ENCODE measurements at regions of chr1 and their contacts with region 1.

Region 1: DNA sequence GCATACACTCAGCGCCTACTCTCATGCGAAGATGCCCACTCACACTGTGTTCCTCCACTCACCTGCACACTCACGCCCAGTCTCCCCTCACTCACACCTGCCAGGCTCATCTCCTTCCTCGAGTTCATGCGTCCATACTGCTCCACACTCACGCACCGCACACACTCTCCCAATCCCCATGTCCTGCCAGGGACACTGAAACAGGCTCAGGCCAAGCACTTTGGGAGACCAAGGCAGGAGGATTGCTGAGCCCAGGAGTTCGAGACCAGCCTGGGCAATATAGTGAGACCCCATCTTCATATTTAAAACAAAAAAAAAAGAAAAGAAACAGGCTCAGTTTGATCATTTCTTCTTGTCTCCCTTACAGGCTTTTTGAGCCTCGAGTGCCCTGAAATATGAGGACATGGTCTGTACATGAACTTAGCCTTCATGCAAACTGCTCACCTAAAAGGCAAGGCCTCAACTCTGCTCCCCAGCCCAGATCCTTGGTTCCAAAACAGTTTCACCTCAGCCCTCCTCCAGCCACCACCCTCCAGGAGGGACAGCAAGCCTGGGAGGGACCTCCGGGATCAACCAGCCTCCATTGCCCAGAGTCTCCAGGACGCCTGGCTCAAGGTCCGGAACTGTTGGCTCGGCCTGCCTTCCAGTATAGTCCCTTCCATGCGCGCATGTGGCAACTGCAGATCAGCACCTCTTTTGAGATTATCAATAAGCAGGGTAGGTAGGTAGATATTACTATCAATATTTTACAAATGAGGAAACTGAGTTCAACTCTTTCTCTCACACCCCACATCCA is 2.4 kb upstream of the PTAFR start:
- DNase-seq: no peak
- ATAC-seq: no peak
- H3K4me3 ChIP-seq: no peak overlapping the region
- H3K27ac ChIP-seq: no peak overlapping the region
- H3K4me1 ChIP-seq: peaks cover 5 to 12% of the 10 kb centered on the region in 2 experiments
- H3K27me3 ChIP-seq: peaks cover 0 to 4% of the 10 kb centered on the region in 2 experiments; a peak in 2 of 5 replicates
- CTCF ChIP-seq: no peak
- EP300 ChIP-seq: no peak
- POLR2A ChIP-seq: no peak
- RAD21 ChIP-seq: no peak

Region 2: DNA sequence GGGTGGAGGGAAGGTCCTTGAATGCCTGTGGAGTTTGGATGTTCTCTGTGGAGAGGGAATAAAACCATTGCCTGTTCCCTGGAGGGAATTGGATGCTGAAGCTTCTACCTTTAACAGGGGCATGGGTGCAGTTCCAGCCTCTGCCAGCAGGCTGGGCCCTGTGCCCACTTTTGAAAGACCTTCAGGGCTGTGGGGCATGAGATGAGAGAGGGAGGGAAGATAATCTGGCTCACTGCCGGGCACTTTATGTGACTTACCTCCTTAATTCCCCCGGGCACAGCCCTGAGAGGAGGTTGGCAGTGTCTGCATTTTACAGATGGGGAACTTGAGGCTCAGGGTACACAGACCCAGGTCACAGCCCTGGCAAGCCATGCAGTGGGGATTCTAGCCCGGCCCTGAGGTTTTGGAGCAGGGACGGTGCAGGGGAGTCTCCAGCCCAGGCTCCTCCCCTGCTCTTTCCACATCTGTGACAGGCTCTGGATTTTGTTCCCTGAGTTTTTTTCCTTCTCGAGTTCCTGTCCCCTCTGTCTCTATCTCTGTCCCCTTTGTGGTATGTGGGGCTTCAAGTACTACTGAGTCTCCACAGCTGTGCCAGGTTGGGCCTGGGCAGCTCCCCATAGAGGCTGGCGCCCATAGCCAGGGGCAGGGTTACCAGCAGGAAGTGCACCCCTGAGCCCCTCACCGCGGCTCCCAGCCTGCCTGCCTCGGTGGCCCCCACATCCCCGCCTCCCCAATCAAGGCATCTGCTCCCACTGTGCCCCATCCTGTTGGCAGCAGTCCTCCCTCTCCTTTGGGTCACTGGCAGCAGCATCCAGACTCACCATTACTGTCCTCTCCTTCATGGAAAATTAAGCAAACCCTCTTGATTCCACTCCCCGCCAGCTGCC is 320.6 kb before region 1 on chr1:
- CTCF ChIA-PET with region 1: no interaction called
- POLR2A ChIA-PET with region 1: no interaction called
- in situ Hi-C with region 1: no loop called
- intact Hi-C with region 1: no loop called
- DNase-seq: peak; percentile 69 to 90 (median 76)
- ATAC-seq: peak; percentile 92
- H3K4me3 ChIP-seq: no peak overlapping the region
- H3K27ac ChIP-seq: no peak overlapping the region
- H3K4me1 ChIP-seq: peaks cover 8 to 23% of the 10 kb centered on the region in 2 experiments; a peak in 4 of 5 replicates
- H3K27me3 ChIP-seq: no peaks in the 10 kb centered on the region
- CTCF ChIP-seq: peak; percentile 94 to 100 (median 99)
- EP300 ChIP-seq: peak; percentile 54; the same call in 1 of the 2 replicates
- POLR2A ChIP-seq: no peak
- RAD21 ChIP-seq: peak; percentile 98 to 99

Region 3: DNA sequence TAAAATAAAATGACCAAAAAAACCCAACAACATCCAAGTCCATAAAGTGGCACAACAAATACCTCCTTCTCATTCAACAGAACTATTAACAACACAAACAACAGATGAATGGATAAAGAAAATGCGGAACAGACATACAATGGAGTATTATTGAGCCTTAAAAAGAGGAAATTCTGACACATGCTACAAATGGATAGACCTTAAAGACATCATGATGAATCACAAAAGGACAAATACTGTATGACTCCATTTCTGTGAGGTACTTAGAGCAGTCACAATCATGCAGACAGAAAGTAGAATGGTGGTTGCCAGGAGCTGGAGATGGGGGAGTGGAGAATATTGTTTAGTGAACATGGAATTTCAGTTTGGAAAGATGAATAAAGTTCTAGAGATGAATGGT is 133.1 kb before region 1 on chr1:
- CTCF ChIA-PET with region 1: no interaction called
- POLR2A ChIA-PET with region 1: no interaction called
- in situ Hi-C with region 1: no loop called
- intact Hi-C with region 1: no loop called
- DNase-seq: no peak
- ATAC-seq: no peak
- H3K4me3 ChIP-seq: no peak overlapping the region
- H3K27ac ChIP-seq: no peak overlapping the region
- H3K4me1 ChIP-seq: peaks cover 0 to 2% of the 10 kb centered on the region in 2 experiments; a peak in 2 of 5 replicates
- H3K27me3 ChIP-seq: no peaks in the 10 kb centered on the region
- CTCF ChIP-seq: no peak
- EP300 ChIP-seq: no peak
- POLR2A ChIP-seq: no peak
- RAD21 ChIP-seq: no peak

Region 4: GRCh38 chr1:28135371-28136168 is 43.3 kb before region 1 on chr1:
- CTCF ChIA-PET with region 1: no interaction called
- POLR2A ChIA-PET with region 1: interaction called, 3 read pairs
- in situ Hi-C with region 1: no loop called
- intact Hi-C with region 1: loop called (anchors 2 kb)
- DNase-seq: no peak
- ATAC-seq: no peak
- H3K4me3 ChIP-seq: no peak overlapping the region
- H3K27ac ChIP-seq: no peak overlapping the region
- H3K4me1 ChIP-seq: peaks cover 9 to 14% of the 10 kb centered on the region in 2 experiments; a peak in 3 of 5 replicates
- H3K27me3 ChIP-seq: no peaks in the 10 kb centered on the region
- CTCF ChIP-seq: no peak
- EP300 ChIP-seq: no peak
- POLR2A ChIP-seq: no peak
- RAD21 ChIP-seq: no peak

Measured in K562 (cell line).